A673 (cell line): ENCODE measurements at regions of chr6 and their contacts with region 1.

Region 1: DNA sequence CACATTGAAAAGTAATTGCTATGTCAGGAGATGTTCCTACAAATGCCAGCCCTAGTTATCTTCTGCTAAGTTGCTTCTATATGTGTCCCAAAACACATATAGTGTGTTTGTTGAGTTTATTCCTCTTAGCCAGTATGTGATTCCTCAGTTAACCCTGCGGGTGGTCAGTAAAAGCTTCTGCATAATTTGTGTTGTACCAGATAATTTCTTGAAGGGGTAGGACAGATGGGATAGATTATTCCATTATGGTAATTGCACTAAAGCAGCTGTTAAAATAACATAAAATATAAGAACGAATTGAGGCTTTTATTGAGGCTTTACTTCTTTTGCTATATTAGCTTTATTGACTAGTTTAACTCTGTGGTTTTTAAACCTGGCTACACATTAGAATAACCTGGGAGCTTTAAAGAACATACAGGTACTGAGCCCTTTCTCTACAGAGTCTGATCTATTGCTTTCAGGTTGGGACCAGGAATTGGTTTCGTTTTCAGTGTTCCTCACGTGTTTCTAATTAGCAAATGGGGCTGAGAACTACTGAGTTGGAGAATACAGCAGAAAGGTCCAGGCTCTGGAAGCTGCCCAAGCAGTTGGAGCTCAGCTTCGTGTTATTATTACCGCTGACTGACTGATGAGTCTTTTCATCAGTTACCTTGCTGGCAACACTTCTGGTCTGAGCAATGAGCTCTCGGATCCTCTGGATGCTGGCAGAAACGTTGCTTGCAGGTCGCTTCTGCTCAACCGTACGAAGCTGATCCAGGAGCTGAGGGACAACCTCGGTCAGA is 56.9 kb downstream of the FAM229B start:
- DNase-seq: peak; percentile 60
- H3K4me3 ChIP-seq: peak overlapping the region; percentile 22
- H3K27ac ChIP-seq: no peak overlapping the region
- H3K4me1 ChIP-seq: peaks cover 13% of the 10 kb centered on the region
- H3K27me3 ChIP-seq: no peaks in the 10 kb centered on the region
- CTCF ChIP-seq: no peak

Region 2: DNA sequence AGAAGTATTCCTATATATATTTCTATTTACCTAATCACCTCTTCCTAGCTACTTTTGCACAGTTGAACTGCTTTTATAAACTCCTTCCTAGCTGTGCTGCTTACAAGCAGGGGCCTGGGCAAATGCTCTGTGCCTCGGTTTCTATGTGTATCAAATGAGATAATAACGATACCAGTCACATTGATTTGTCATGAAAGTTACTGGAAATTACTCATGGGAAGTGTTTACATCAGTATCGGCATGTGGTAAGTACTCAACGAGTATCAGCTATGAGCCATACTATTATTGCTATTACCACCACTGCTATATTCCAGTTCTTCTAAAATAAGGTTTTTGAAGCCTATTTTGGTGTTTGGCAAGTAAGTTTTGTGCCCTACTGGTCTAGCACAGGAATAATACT is 105.2 kb after region 1 on chr6:
- CTCF ChIA-PET with region 1: interaction called, 11 read pairs
- POLR2A ChIA-PET with region 1: no interaction called
- intact Hi-C with region 1: no loop called
- DNase-seq: no peak
- H3K4me3 ChIP-seq: no peak overlapping the region
- H3K27ac ChIP-seq: no peak overlapping the region
- H3K4me1 ChIP-seq: no peaks in the 10 kb centered on the region
- H3K27me3 ChIP-seq: peaks cover 14% of the 10 kb centered on the region
- CTCF ChIP-seq: no peak